ENCODE measurements at regions of chr7 and their contacts with region 1.

Region 1: GRCh38 chr7:17134786-17135185 is 163.7 kb upstream of the AHR start:
- DNase-seq: peak; percentile 71
- H3K4me3 Mint-ChIP-seq: peak overlapping the region; percentile 29
- H3K27ac Mint-ChIP-seq: peak overlapping the region; percentile 35
- H3K4me1 Mint-ChIP-seq: peaks cover 56% of the 10 kb centered on the region
- H3K27me3 Mint-ChIP-seq: no peaks in the 10 kb centered on the region

Region 2: DNA sequence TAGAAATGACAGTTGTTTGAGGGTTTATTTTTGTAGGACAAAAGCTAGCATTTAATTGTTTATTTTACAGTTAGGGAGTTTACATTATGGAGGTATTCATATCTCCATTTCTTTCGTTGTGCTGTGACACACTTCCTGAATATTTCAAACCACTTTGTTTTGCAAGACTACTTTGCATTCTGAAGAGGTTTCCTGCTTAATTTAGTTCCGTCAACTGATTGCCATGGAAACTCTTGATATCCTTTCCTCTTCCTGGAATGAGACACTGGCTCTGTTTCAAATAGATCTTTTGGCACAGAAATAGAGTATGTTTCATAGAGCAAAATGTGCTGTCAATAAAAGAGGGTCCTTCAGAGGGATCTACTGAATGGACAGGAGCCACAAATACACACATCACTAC is 93.5 kb before region 1 on chr7:
- intact Hi-C with region 1: loop called (anchors 5 kb)
- DNase-seq: no peak
- H3K4me3 Mint-ChIP-seq: no peak overlapping the region
- H3K27ac Mint-ChIP-seq: peak overlapping the region; percentile 54
- H3K4me1 Mint-ChIP-seq: peaks cover 26% of the 10 kb centered on the region
- H3K27me3 Mint-ChIP-seq: peaks cover 12% of the 10 kb centered on the region

Measured in activated CD4-positive, alpha-beta T cell treated with anti-CD3 and anti-CD28 coated beads, Interleukin-2, amount 10 ng/mL, durations not matched to agents 24 days and 14 days (primary cell).